Activated CD4-positive, alpha-beta T cell treated with anti-CD3 and anti-CD28 coated beads, Interleukin-2, amount 10 ng/mL, durations not matched to agents 24 days and 14 days (primary cell): ENCODE measurements at regions of chr3 and their contacts with region 1.

Region 1: DNA sequence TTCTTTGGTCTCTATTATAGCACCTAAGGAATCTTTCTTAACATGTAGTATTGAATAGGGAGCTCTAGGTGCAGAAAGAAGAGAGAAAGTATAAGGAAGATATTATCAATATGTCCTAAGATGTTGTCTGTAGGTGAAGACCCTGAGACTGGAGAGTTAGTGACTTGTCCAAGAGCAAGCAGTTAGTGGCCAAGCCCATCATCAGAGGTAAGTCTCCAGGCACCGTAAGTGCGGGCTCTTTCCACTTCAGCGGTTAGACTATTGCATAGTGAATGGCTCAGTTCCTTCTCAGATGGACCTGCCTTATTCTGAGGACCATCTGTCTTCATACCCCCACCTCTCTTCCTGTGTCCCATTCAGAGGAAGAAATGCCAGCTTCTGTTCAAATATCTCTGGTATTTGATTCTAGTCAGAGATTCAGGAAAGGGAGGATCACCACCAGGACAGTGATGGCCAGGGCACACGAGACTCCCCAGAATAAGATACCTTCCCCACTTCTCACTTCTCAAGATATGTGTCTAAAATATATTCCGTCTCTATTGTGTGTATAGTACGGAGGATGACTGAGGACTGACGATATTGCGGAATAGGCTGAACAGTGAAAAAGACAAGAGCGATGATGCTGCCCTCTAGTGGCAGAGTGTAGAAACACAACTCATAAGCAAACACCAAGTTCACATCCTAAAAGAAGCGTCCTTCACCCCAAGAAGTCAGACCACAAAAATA is 19.1 kb upstream of the ADGRG7 start:
- DNase-seq: peak; percentile 88
- H3K4me3 Mint-ChIP-seq: peak overlapping the region; percentile 23
- H3K27ac Mint-ChIP-seq: no peak overlapping the region
- H3K4me1 Mint-ChIP-seq: peaks cover 5% of the 10 kb centered on the region
- H3K27me3 Mint-ChIP-seq: peaks cover 16% of the 10 kb centered on the region

Region 2: GRCh38 chr3:99817437-99818240 is 772.6 kb before region 1 on chr3 and contains the start of gene CMSS1:
- intact Hi-C with region 1: loop called (anchors 5 kb)
- DNase-seq: peak; percentile 99
- H3K4me3 Mint-ChIP-seq: peak within 1 kb of the TSS; percentile 100
- H3K27ac Mint-ChIP-seq: peak within 1 kb of the TSS; percentile 99
- H3K4me1 Mint-ChIP-seq: peaks cover 31% of the 10 kb centered on the region
- H3K27me3 Mint-ChIP-seq: peaks cover 2% of the 10 kb centered on the region
- total RNA-seq, gene CMSS1: 117 and 126 TPM in 2 replicates

Region 3: GRCh38 chr3:100316641-100317069 is 273.6 kb before region 1 on chr3:
- intact Hi-C with region 1: loop called (anchors 1 kb)
- DNase-seq: peak; percentile 86
- H3K4me3 Mint-ChIP-seq: peak overlapping the region; percentile 40
- H3K27ac Mint-ChIP-seq: peak overlapping the region; percentile 55
- H3K4me1 Mint-ChIP-seq: peaks cover 11% of the 10 kb centered on the region
- H3K27me3 Mint-ChIP-seq: no peaks in the 10 kb centered on the region

Region 4: DNA sequence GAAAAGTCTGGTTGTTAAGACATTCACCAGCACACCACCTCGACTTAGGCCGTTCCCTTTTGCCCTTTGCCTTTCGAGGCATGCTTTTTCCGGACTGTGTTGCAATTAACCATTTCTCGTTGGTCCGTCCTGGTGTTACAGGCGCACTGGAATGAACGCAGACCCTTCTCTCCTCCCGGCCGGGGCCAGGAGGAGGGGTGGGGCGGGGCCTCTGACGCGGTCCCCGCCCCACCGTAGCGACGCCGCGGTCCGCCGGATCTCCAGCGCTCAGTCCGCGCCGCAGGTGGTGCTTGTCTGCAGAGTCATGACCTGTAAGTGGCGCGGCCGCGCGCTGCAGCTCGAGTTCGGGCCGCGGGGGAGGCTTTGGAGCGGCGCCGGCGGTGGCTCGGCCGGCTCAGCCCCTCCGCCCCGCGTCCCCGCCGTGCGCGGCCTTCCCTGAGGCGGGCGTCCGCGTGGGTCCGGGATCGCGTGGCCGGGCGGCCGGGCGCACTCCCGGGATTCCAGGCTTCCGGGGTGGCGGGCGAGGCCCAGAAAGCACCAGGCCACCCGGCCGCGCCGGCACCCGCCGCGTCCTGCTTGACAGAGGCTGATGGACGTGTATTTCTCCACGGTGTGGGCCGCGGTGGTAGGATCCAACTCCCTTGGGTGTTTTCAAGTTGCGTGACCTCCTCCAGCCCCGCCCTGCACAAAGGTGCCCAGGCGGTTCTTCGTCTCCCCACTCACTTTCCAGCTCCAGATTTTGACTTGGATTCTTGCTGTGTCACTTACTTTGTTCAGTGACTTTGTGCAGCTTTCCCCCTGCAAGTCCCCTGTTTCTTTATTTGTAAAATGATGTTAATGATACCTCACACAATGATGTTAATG is 255.6 kb before region 1 on chr3 and contains the start of gene NIT2:
- intact Hi-C with region 1: loop called (anchors 5 kb)
- DNase-seq: peak; percentile 93
- H3K4me3 Mint-ChIP-seq: peak within 1 kb of the TSS; percentile 95
- H3K27ac Mint-ChIP-seq: peak within 1 kb of the TSS; percentile 98
- H3K4me1 Mint-ChIP-seq: peaks cover 18% of the 10 kb centered on the region
- H3K27me3 Mint-ChIP-seq: no peaks in the 10 kb centered on the region
- total RNA-seq, gene NIT2: 75.5 and 79.2 TPM in 2 replicates

Region 5: DNA sequence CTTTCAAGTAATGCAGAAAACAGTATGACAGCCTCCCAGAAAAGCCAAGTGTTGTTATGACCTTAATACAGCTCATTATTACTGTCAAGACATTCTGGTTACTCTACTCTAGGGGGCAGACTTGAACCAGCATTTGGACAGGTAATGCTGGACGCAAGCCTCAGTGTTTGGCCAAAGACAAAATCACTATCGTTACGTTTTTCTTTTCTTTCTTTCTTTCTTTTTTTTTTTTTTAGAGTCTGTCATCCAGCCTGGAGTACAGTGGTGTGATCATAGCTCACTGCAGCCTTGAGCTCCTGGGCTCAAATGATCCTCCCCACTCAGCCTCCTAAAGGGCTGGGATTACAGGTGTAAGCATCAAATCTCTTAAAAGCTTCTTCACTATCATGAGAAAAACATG is 127.3 kb before region 1 on chr3:
- intact Hi-C with region 1: loop called (anchors 1 kb)
- DNase-seq: peak; percentile 70
- H3K4me3 Mint-ChIP-seq: no peak overlapping the region
- H3K27ac Mint-ChIP-seq: no peak overlapping the region
- H3K4me1 Mint-ChIP-seq: peaks cover 5% of the 10 kb centered on the region
- H3K27me3 Mint-ChIP-seq: no peaks in the 10 kb centered on the region

Region 6: DNA sequence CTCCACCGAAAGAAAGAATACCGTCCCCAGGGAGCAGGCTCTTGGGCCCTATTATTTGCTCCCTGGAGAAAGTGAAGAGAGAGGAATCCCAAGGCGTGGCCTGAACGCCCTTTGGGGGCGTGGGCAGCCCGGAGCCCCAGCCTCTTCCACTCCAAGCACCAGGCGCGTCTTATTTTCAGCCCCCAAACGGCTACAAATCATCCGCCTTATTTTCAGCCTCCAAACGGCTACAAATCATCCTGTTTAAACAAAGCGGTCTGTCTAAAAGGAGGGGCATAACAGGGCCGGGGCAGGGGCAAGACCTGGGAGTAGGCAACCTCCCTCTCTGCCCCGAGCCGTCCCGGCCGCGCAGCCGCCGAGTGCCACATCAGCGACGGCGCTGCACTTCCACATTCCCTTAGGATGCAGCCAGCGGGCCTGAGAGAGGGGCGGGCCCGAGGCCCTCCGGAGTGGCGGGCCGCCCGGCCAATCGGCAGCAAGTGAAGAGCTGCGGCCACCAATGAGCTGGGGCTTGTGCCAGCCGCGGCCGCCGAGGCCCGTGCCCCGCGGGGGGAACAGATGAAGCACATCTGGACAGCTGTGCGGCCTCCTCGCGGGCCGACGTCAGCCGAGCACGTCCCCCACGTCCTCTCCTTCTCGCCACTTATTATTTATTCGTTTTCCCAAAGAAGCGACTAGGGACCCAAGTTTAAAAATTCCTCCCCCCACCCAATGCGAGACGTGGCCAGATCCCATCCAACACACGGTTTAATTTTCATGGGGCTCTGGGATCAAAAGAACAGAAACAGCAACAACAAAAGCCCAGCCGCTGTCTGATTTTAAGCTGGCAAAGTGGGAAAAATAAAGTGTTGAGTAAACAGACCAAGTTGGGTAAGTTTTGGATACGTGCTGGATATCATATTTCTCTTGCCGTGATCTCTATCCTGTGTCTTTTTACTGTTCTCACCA is 97.9 kb before region 1 on chr3 and contains the start of gene TMEM45A:
- intact Hi-C with region 1: no loop called
- DNase-seq: peak; percentile 93
- H3K4me3 Mint-ChIP-seq: peak within 1 kb of the TSS; percentile 89
- H3K27ac Mint-ChIP-seq: peak within 1 kb of the TSS; percentile 31
- H3K4me1 Mint-ChIP-seq: peaks cover 7% of the 10 kb centered on the region
- H3K27me3 Mint-ChIP-seq: peaks cover 29% of the 10 kb centered on the region
- total RNA-seq, gene TMEM45A: 0.26 TPM in 1 of 2 replicates, not detected in the other

Region 7: DNA sequence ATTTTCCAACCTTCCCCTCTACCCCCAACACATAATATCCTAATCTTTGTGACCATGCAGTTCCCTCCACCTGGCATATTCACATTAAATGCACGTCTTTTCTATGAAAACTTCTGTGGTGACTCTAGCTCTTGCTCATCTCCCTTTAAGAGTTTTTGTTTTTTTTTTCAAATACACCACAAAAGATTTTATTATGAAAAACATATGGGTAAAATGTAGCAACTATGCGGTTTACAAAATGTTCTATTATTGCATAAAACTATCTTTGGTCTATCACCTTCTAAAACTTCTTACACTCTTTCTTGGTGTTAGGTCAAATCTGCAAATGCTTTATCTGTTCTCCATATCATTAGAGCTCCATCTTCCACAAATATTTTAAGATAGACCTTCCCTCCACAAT is 19.5 kb before region 1 on chr3:
- intact Hi-C with region 1: no loop called
- DNase-seq: no peak
- H3K4me3 Mint-ChIP-seq: no peak overlapping the region
- H3K27ac Mint-ChIP-seq: no peak overlapping the region
- H3K4me1 Mint-ChIP-seq: no peaks in the 10 kb centered on the region
- H3K27me3 Mint-ChIP-seq: no peaks in the 10 kb centered on the region

Region 8: GRCh38 chr3:100603469-100603868 is 13.2 kb after region 1 on chr3:
- intact Hi-C with region 1: no loop called
- DNase-seq: no peak
- H3K4me3 Mint-ChIP-seq: peak overlapping the region; percentile 72
- H3K27ac Mint-ChIP-seq: peak overlapping the region; percentile 83
- H3K4me1 Mint-ChIP-seq: peaks cover 27% of the 10 kb centered on the region
- H3K27me3 Mint-ChIP-seq: peaks cover under 1% of the 10 kb centered on the region

Region 9: GRCh38 chr3:100650651-100651611 is 60.7 kb after region 1 on chr3:
- intact Hi-C with region 1: no loop called
- DNase-seq: peak; percentile 73
- H3K4me3 Mint-ChIP-seq: peak overlapping the region; percentile 58
- H3K27ac Mint-ChIP-seq: peak overlapping the region; percentile 75
- H3K4me1 Mint-ChIP-seq: peaks cover 12% of the 10 kb centered on the region
- H3K27me3 Mint-ChIP-seq: peaks cover 2% of the 10 kb centered on the region